Gastrocnemius medialis (tissue), 4 donors: ENCODE measurements at regions of chr12 and their contacts with region 1.

Region 1: DNA sequence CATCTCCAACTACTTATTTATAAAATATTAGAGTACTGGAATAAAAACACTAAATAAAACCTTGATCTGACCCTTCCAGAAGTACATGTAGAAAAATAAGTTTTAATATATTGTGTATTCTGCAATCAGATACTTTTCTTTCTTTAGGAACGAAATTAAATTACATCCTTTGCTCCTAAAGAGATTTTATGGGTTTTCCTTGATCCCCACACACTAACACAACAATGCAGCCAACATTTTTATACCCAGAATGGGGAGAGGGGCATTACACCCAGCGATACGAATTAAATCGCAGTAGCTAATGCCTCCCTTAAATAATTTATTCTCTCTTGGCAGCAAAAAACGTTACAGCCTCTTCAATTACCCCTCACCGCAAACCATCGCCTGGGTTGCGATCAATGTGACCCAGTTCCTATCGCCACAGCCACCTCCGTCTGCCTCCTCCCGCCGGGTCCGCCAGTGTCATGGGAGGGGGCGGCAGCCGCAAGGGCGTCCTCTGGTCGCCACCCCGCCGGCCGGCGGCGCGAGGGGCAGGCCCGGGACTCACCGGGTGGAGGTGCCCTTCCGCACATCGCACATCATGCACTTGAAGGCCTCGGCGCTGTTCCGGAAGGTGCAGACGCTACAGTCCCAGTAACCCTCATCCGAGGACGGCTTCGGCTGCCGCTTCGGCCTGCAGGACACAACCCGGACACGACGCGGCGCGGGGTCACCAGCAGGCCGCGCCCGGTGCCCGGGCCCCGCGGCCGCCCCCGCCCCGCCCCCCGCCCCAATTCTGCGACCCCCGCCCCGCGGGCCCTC is 796 bp downstream of the YAF2 start:
- DNase-seq: peak; percentile 57 to 82
- ATAC-seq: peak; percentile 66 to 79
- H3K4me3 ChIP-seq: peak overlapping the region; percentile 73 to 99 (median 81)
- H3K27ac ChIP-seq: peak overlapping the region; percentile 77 to 98 (median 89)
- H3K4me1 ChIP-seq: peaks cover 53 to 57% of the 10 kb centered on the region in 2 donors
- H3K27me3 ChIP-seq: no peaks in the 10 kb centered on the region
- CTCF ChIP-seq: peak; percentile 27 to 59 (median 32)
- POLR2A ChIP-seq: no peak

Region 2: GRCh38 chr12:42104087-42104486 is 133.2 kb before region 1 on chr12:
- in situ Hi-C with region 1: no loop called
- intact Hi-C with region 1: no loop called
- DNase-seq: no peak
- ATAC-seq: no peak
- H3K4me3 ChIP-seq: no peak overlapping the region
- H3K27ac ChIP-seq: no peak overlapping the region
- H3K4me1 ChIP-seq: peaks cover 0 to 4% of the 10 kb centered on the region in 2 donors
- H3K27me3 ChIP-seq: no peaks in the 10 kb centered on the region
- CTCF ChIP-seq: no peak
- POLR2A ChIP-seq: no peak

Region 3: GRCh38 chr12:42144408-42145196 is 92.7 kb before region 1 on chr12 and contains the start of gene GXYLT1:
- in situ Hi-C with region 1: loop called in 3 of 4 experiments (anchors 5 to 10 kb)
- intact Hi-C with region 1: loop called (anchors 2 kb)
- DNase-seq: peak; percentile 80 to 90
- ATAC-seq: peak; percentile 87 to 90
- H3K4me3 ChIP-seq: peak within 1 kb of the TSS; percentile 52 to 83 (median 68)
- H3K27ac ChIP-seq: peak within 1 kb of the TSS; percentile 71 to 92 (median 88)
- H3K4me1 ChIP-seq: peaks cover 21 to 34% of the 10 kb centered on the region in 2 donors
- H3K27me3 ChIP-seq: no peaks in the 10 kb centered on the region
- CTCF ChIP-seq: no peak
- POLR2A ChIP-seq: peak; percentile 86 to 88
- total RNA-seq, gene GXYLT1: 4.4 to 5.5 (median 5.0) TPM

Region 4: GRCh38 chr12:42325653-42326474 is 88.6 kb after region 1 on chr12 and contains the starts of genes PPHLN1 and ZCRB1:
- in situ Hi-C with region 1: loop called in 2 of 4 experiments (anchors 5 to 10 kb)
- intact Hi-C with region 1: loop called (anchors 1 kb)
- DNase-seq: peak; percentile 66 to 79
- ATAC-seq: peak; percentile 93 to 96
- H3K4me3 ChIP-seq: peak within 1 kb of the TSS; percentile 75 to 94 (median 83)
- H3K27ac ChIP-seq: peak within 1 kb of the TSS; percentile 84 to 90 (median 88)
- H3K4me1 ChIP-seq: peaks cover 14 to 17% of the 10 kb centered on the region in 2 donors
- H3K27me3 ChIP-seq: no peaks in the 10 kb centered on the region
- CTCF ChIP-seq: peak in 1 of 5 experiments; percentile 7
- POLR2A ChIP-seq: peak; percentile 65 to 71
- total RNA-seq, gene PPHLN1: 32.7 to 52.3 (median 43.5) TPM
- total RNA-seq, gene ZCRB1: 24.4 to 42.4 (median 35.0) TPM

Region 5: DNA sequence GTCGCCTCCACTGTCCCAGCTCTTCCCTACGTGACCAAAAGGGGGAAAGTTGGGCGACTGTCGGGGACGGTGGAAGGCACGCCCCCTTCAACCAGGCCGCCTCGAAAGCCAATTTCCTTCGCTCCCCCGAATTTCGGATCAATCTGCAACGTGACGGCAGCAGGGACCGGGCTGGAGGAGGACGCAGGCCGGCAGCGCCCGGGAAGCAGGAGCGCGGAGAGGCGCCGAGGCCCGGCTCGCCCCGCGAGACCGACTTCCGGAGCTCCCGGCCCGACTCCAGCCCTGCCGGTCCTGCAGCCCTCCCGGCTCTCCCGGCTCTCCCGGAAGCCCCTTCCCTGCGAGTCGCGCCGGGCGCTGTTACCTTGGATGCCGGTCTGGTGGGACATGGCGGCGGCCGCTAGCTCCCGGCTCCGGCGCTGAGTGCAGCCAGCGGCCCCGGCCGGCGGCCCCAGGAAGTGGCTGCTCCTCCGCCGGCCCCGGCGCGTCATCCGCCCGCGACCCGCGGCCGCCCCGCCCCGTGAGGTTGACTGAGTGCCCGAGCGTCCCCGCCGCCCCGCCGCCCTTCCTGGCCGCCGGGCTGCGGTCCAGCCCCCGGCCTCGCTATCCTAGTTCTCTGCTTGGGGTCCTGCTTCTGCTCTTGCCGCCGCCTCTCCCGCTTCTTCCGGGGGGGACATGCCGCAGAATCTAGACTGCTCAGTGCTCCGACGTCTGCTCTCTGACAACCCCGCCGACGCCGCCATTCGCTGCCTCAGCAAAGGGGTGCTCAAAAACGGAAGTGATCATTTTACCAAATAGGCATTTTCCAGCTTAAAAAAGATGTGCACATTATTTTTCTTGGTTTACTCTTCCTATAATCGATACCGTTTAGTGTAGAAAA is 1568.8 kb after region 1 on chr12 and contains the start of gene TWF1:
- in situ Hi-C with region 1: no loop called
- intact Hi-C with region 1: loop called (anchors 5 kb)
- DNase-seq: peak; percentile 58 to 77
- ATAC-seq: peak; percentile 98
- H3K4me3 ChIP-seq: peak within 1 kb of the TSS; percentile 80 to 92 (median 86)
- H3K27ac ChIP-seq: peak within 1 kb of the TSS; percentile 87 to 96 (median 94)
- H3K4me1 ChIP-seq: peaks cover 21 to 27% of the 10 kb centered on the region in 2 donors
- H3K27me3 ChIP-seq: no peaks in the 10 kb centered on the region
- CTCF ChIP-seq: peak in 4 of 5 experiments; percentile 31 to 56 (median 43)
- POLR2A ChIP-seq: peak; percentile 62 to 76
- total RNA-seq, gene TWF1: 7.4 to 10.7 (median 9.0) TPM